ENCODE measurements at regions of chr11 and their contacts with region 1.

Region 1: DNA sequence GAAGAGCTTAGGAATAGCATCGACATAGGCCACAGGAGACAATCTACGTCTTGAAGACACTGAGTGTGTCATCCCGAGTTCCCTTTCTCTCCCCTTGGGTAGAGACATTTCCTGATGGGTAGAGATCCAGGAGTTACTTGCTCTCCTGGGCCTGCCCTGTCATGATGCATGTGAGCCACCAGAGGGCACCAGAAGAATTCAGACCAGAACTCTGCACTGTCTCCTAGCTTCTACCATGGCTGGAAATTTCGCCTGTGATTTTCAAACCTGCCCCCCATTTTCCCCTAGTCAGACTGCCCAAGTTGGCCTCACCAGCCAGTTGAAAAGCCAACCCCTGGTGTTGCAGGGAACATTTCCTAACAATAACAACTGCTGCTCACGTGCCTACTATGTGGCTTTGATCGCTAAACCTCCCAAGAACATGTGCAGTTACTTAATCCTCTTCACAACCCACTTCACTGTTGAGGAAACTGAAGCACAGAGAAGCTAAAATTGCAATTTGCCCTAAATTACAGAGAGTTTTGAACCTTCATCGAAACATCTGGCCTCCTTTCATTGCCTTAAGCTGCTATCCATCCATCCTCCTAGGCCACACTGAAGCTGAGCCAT is 47.2 kb downstream of the C11orf58 start:
- DNase-seq: peak; percentile 64 to 81 (median 76)
- ATAC-seq: peak; percentile 77 to 81
- H3K4me3 ChIP-seq: no peak overlapping the region
- H3K27ac ChIP-seq: peak overlapping the region; percentile 38
- H3K4me1 ChIP-seq: peaks cover 23% of the 10 kb centered on the region
- H3K27me3 ChIP-seq: no peaks in the 10 kb centered on the region

Region 2: DNA sequence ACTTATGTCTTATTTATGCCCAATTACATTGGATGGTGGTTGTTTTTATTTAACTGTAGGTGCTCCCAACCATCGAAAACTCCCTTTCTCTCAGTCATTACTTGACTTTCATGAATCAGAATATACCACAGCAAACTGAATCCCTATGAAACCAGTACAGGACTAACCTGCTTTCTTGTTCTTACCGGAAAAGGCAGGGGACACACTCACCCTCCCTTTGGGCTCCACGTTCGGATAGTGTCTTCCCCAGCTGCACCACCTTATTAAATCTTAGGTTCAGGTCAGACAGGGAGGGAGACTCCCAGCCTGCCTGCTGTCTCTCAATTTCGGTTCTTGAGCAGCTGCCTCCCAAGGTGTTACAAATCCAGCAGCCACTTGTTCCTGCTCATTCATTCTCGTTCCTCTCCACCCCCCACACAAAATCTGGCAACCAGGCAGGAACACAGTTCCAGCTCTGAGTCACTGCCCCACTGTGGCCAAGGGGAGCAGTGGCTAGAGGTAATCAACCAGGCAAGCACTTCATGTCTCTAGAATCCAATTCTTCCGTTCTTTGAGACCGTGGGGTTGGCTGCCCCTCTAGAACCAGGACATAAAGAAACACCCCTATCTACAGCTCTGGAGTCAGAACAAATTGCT is 95.6 kb after region 1 on chr11:
- intact Hi-C with region 1: loop called in 2 of 4 experiments (anchors 5 kb)
- DNase-seq: peak; percentile 70 to 81 (median 79)
- ATAC-seq: peak; percentile 86 to 91
- H3K4me3 ChIP-seq: no peak overlapping the region
- H3K27ac ChIP-seq: no peak overlapping the region
- H3K4me1 ChIP-seq: peaks cover 7% of the 10 kb centered on the region
- H3K27me3 ChIP-seq: no peaks in the 10 kb centered on the region

Region 3: DNA sequence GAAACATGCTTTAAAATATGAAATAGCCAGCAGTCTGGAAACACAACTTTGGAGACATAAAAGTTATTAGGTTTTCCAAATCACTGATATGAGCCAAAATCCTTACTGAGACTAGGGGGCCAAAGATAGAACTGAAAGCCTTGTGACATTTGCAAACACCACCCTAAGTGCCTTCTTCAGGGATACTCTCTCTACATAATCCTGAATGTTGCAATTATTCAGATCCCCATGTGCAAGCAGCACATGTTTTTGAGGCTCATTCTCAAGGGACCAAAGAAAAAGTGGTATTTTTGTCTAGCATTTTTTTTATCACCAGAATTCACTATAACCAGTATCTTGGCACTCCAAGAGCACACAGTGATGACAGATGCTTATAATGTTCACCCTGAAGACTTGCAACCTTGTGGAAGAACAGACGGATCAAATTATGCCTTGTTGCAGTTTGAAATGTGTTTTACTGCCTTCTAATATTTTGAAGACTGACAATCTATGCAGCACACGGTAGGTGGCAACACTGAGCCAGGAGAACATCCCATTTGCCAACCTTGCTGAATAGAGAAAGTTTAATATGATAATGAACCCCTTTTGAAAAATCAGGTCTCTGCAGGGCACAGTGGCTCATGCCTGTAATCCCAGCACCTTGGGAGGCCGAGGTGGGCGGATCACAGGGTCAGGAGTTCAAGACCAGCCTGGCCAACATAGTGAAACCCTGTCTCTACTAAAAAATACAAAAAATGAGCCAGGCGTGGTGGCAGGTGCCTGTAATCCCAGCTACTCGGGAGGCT is 150.1 kb after region 1 on chr11:
- intact Hi-C with region 1: loop called in 2 of 4 experiments (anchors 10 kb)
- DNase-seq: no peak
- ATAC-seq: peak; percentile 12 to 38
- H3K4me3 ChIP-seq: no peak overlapping the region
- H3K27ac ChIP-seq: no peak overlapping the region
- H3K4me1 ChIP-seq: peaks cover 2% of the 10 kb centered on the region
- H3K27me3 ChIP-seq: no peaks in the 10 kb centered on the region

Region 4: GRCh38 chr11:16945671-16946469 is 160.2 kb after region 1 on chr11:
- intact Hi-C with region 1: loop called in 1 of 4 experiments (anchors 10 kb)
- DNase-seq: peak; percentile 53 to 75 (median 71)
- ATAC-seq: peak; percentile 78 to 80
- H3K4me3 ChIP-seq: no peak overlapping the region
- H3K27ac ChIP-seq: no peak overlapping the region
- H3K4me1 ChIP-seq: no peaks in the 10 kb centered on the region
- H3K27me3 ChIP-seq: no peaks in the 10 kb centered on the region

Region 5: GRCh38 chr11:17014838-17015626 is 229.4 kb after region 1 on chr11:
- intact Hi-C with region 1: loop called in 1 of 4 experiments (anchors 5 kb)
- DNase-seq: peak in 1 of 3 donors; percentile 52
- ATAC-seq: peak; percentile 13 to 17
- H3K4me3 ChIP-seq: peak overlapping the region; percentile 81
- H3K27ac ChIP-seq: peak overlapping the region; percentile 23
- H3K4me1 ChIP-seq: no peaks in the 10 kb centered on the region
- H3K27me3 ChIP-seq: no peaks in the 10 kb centered on the region

Region 6: DNA sequence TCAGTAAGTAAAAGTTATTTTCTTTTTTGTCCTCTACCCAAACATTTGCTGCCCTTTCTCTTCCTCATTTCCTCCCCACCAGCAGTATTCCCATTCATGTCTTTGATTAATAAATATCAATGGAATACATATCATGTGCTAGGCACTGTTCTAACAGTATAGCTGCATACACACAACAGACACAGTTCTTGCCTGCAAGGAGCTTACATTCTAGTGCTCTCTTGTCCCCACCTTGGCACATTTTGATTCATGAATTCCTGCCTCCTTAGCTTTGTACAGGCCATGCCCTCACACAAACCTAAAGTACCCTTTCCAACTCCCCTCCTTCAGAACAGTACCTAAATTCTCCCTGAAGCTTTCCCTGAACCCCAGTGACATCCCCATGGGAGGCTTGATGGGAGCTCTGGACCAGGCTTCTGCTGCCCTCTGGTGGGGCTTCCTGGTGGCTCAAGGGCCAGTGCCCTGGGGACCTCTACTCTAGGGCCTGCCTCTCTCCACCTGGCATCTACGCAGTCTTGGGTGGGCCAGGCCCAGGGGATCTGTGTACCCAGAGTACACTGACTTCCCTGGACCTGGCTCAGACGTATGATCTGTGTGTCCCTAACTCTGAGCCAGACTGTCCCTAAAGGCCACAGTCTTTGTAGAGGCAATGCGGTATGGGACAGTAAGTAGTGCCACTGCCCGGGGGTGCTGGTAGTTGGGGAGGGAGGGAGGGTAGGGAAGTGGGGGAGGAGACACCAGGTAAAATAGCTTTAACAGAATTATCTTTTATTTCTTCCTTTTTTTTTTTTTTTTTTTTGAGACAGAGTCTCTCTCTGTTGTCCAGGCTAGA is 277.8 kb after region 1 on chr11:
- intact Hi-C with region 1: loop called in 3 of 4 experiments (anchors 2 to 10 kb)
- DNase-seq: peak; percentile 70 to 87 (median 87)
- ATAC-seq: peak; percentile 92 to 94
- H3K4me3 ChIP-seq: no peak overlapping the region
- H3K27ac ChIP-seq: no peak overlapping the region
- H3K4me1 ChIP-seq: no peaks in the 10 kb centered on the region
- H3K27me3 ChIP-seq: no peaks in the 10 kb centered on the region